ENCODE measurements at regions of chr12 and their contacts with region 1.

Region 1: DNA sequence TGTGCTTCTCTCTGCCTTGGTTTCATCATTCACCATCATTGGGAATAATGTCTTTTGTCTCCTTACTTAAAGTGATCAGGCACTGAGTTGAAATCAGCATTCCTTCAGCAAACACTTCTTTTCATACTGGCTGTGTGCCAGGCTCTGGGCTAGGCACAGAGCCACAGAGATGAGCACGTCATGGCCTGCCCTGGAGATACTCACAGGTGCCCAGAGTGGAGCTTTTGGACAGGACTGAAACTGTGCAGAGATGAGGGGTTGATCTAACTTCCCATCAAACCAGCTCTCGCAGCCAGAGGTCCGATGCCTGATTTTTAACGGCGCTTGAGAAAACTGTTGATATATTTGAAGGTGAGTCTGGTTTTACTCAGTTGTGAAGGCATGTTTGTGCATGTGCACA is 43.1 kb downstream of the CACNA1C start:
- DNase-seq: peak; percentile 96
- H3K4me3 ChIP-seq: no peak overlapping the region
- H3K27ac ChIP-seq: peak overlapping the region; percentile 78 to 91 (median 89)
- H3K4me1 ChIP-seq: peaks cover 0 to 97% (median 95%) of the 10 kb centered on the region in 4 donors
- H3K27me3 ChIP-seq: no peaks in the 10 kb centered on the region
- CTCF ChIP-seq: no peak
- EP300 ChIP-seq: peak; percentile 96 to 99 (median 98)
- POLR2A ChIP-seq: no peak

Region 2: DNA sequence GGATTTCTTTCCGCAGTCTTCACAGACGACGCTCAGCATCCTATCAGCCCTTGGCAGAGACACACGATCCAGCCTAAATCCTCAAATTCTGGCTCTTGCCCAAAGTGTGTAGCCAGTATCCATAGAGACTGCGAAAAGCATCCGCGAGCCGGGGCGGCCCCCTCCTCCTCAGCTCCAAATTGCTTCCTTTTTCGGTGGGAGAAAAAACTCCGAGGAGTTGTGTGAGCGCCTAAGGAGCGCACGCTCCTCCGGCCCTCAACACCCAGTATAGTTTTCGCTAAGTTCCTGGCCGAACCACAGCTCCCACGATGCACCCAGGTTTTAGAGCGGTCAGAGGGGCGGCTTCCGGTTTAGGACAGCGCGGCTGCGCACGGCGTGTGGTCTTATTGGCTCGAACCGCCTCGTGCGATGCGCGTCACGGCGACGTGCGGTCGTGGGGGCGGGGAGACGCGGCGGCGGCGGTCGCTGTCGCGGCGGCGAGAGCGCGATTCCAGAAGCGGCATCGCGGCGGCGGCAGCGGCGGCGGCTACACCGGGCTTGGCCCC is 405.2 kb before region 1 on chr12 and contains the start of gene ADIPOR2:
- intact Hi-C with region 1: no loop called
- DNase-seq: peak; percentile 98
- H3K4me3 ChIP-seq: peak within 1 kb of the TSS; percentile 76 to 95 (median 85)
- H3K27ac ChIP-seq: peak within 1 kb of the TSS; percentile 90 to 97 (median 93)
- H3K4me1 ChIP-seq: peaks cover 0 to 25% (median 19%) of the 10 kb centered on the region in 4 donors
- H3K27me3 ChIP-seq: no peaks in the 10 kb centered on the region
- CTCF ChIP-seq: no peak
- EP300 ChIP-seq: peak in 1 of 4 donors; percentile 80
- POLR2A ChIP-seq: peak; percentile 25 to 50
- total RNA-seq, gene ADIPOR2: 25.2 to 29.6 (median 27.9) TPM

Region 3: GRCh38 chr12:1972856-1973317 is 123.0 kb before region 1 on chr12:
- intact Hi-C with region 1: loop called (anchors 5 kb)
- DNase-seq: peak; percentile 95
- H3K4me3 ChIP-seq: peak overlapping the region in 3 of 4 donors; percentile 13 to 19 (median 18)
- H3K27ac ChIP-seq: peak overlapping the region; percentile 85 to 94 (median 86)
- H3K4me1 ChIP-seq: peaks cover 0 to 95% (median 86%) of the 10 kb centered on the region in 4 donors
- H3K27me3 ChIP-seq: no peaks in the 10 kb centered on the region
- CTCF ChIP-seq: no peak
- EP300 ChIP-seq: peak; percentile 95 to 98 (median 96)
- POLR2A ChIP-seq: no peak

Region 4: GRCh38 chr12:2075508-2076195 is 20.2 kb before region 1 on chr12:
- intact Hi-C with region 1: loop called (anchors 1 kb)
- DNase-seq: peak; percentile 87
- H3K4me3 ChIP-seq: peak overlapping the region in 1 of 4 donors; percentile 14
- H3K27ac ChIP-seq: peak overlapping the region; percentile 83 to 98 (median 84)
- H3K4me1 ChIP-seq: peaks cover 0 to 63% (median 54%) of the 10 kb centered on the region in 4 donors
- H3K27me3 ChIP-seq: no peaks in the 10 kb centered on the region
- CTCF ChIP-seq: no peak
- EP300 ChIP-seq: peak in 3 of 4 donors; percentile 42 to 95 (median 66)
- POLR2A ChIP-seq: no peak

Region 5: DNA sequence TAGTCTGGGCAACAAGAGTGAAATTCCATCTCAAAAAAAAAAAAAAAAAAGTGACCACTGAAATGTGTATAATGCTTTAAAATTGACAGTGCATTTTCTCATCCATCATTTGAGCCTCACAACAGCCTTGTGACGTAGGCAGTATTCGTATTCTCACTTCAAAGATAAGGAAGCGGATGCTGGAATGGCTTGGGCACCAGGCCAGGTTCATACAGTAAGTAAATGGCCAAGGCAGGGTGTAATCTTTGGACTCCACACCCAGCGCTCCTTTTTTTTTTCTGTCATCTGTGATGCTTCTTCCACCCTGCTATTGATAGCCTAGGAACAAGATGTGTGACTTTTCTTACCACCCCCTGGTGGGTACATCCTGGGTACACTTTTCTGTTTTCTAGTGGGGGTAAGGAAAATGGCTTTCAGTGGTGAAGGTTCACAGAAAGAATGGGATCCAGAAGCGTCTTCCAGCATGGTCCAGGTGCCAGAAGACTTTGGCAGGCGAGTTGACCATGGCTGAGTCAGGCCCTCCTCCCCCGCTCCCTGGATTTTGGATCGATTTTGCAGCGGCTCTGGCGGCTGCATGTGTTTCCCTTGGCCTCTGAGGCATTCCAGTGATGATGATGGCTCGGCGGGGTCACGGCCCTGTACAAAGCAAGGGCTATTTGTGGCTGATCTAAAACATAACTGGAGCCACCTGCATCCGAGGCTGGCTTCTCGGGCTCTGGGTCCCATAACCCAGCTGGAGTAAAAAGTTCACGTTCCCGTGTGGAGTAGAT is 67.5 kb after region 1 on chr12:
- intact Hi-C with region 1: loop called (anchors 5 kb)
- DNase-seq: peak; percentile 95
- H3K4me3 ChIP-seq: no peak overlapping the region
- H3K27ac ChIP-seq: peak overlapping the region; percentile 76 to 89 (median 80)
- H3K4me1 ChIP-seq: peaks cover 0 to 85% (median 73%) of the 10 kb centered on the region in 4 donors
- H3K27me3 ChIP-seq: no peaks in the 10 kb centered on the region
- CTCF ChIP-seq: no peak
- EP300 ChIP-seq: no peak
- POLR2A ChIP-seq: no peak